ENCODE measurements at regions of chr10 and their contacts with region 1.

Region 1: GRCh38 chr10:33559105-33559504 is 224.6 kb upstream of the NRP1 start:
- DNase-seq: no peak
- ATAC-seq: peak; percentile 79
- H3K4me3 ChIP-seq: no peak overlapping the region
- H3K27ac ChIP-seq: no peak overlapping the region
- H3K4me1 ChIP-seq: no peaks in the 10 kb centered on the region
- H3K27me3 ChIP-seq: no peaks in the 10 kb centered on the region
- CTCF ChIP-seq: no peak
- EP300 ChIP-seq: no peak; a peak in 1 of 4 replicates
- POLR2A ChIP-seq: no peak
- RAD21 ChIP-seq: no peak

Region 2: DNA sequence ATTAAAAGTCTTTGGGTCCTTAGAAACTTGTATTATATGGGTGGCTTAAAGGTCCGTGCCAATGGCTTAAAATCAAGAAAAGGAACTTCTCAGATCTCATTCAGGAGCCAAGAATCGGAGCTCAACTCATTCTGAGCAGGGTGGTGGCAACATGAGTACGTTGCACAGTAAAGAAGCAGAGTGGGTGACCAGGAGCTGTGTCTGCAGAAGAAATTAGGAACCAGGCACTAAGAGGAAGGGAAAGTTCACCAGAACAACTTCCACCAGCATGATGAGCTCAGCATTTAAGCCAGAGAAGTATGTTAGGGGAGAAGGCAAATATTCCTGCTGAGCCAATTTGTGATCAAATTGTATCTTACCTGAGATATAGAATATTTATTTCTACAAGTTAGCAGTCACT is 11.4 kb after region 1 on chr10:
- CTCF ChIA-PET with region 1: interaction called, 3 read pairs
- POLR2A ChIA-PET with region 1: no interaction called
- RAD21 ChIA-PET with region 1: interaction called, 3 read pairs
- SMC1A ChIA-PET with region 1: interaction called, 11 read pairs
- in situ Hi-C with region 1: no loop called
- intact Hi-C with region 1: no loop called
- DNase-seq: no peak
- ATAC-seq: no peak
- H3K4me3 ChIP-seq: no peak overlapping the region
- H3K27ac ChIP-seq: no peak overlapping the region
- H3K4me1 ChIP-seq: no peaks in the 10 kb centered on the region
- H3K27me3 ChIP-seq: no peaks in the 10 kb centered on the region
- CTCF ChIP-seq: no peak
- EP300 ChIP-seq: no peak
- POLR2A ChIP-seq: no peak
- RAD21 ChIP-seq: no peak

Measured in GM12878 (cell line).